HEK293T (cell line): ENCODE measurements at regions of chr10 and their contacts with region 1.

Region 1: GRCh38 chr10:29304264-29305030 is 15.6 kb downstream of the LYZL1 start:
- DNase-seq: peak; percentile 55

Region 2: GRCh38 chr10:29239569-29240472 is 64.6 kb before region 1 on chr10:
- CTCF ChIA-PET with region 1: interaction called, 20 read pairs
- POLR2A ChIA-PET with region 1: interaction called, 3 read pairs
- DNase-seq: peak; percentile 59

Region 3: DNA sequence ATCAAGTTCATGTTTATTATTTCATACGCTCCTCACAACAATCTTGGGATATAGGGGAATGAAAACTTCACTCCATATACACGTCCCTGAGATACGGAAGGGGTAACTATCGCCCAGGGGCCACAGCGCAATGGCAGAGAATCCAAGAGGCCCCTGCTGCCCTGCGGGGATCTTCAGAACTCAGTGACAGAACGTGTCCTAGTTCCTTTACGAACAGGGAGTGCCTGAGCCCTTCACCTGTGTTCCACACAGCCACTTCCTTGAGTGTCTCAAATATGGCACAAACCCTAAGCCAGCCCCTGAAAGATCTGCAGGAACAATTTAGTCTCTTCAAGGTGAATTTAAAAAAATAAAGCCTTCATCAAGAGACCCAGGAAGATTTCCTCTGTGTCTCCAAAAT is 10.3 kb after region 1 on chr10:
- CTCF ChIA-PET with region 1: interaction called, 10 read pairs
- POLR2A ChIA-PET with region 1: no interaction called
- DNase-seq: no peak

Region 4: GRCh38 chr10:29508554-29509244 is 204.3 kb after region 1 on chr10:
- CTCF ChIA-PET with region 1: no interaction called
- POLR2A ChIA-PET with region 1: no interaction called
- DNase-seq: no peak